AG04450 (cell line): ENCODE measurements at regions of chr18 and their contacts with region 1.

Region 1: DNA sequence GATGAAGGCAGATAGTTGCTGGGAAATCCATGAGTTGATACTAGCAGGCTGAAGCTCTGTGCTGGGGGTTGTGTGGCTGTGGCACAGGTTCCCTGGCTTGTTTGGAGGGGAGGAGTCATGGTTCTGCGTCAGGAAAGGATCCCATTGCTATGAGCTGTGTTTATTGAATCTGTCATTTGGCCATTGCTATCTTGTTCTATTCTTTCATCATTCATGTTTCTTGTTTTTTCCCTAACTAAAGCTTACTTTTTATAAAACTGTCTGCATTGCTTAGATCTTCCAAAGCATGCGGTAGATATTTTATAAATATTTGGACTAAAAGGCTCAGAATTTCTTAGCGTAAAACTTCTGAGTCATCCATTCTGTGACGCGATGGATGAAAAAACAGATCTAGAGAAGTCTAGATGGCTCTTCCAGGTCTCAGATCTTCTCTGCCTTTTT is 335.3 kb downstream of the PTPRM start:
- DNase-seq: peak; percentile 96
- H3K4me3 ChIP-seq: no peak overlapping the region; the same call in 1 of the 2 replicates
- H3K27ac ChIP-seq: peak overlapping the region; percentile 93
- H3K27me3 ChIP-seq: no peaks in the 10 kb centered on the region
- CTCF ChIP-seq: no peak

Region 2: GRCh38 chr18:7945882-7946281 is 43.5 kb after region 1 on chr18:
- CTCF ChIA-PET with region 1: no interaction called
- POLR2A ChIA-PET with region 1: interaction called, 10 read pairs
- DNase-seq: peak; percentile 87
- H3K4me3 ChIP-seq: no peak overlapping the region
- H3K27ac ChIP-seq: no peak overlapping the region
- H3K27me3 ChIP-seq: no peaks in the 10 kb centered on the region
- CTCF ChIP-seq: no peak